Activated CD4-positive, alpha-beta T cell treated with anti-CD3 and anti-CD28 coated beads, Interleukin-2, amount 10 ng/mL, durations not matched to agents 7 days and 5 days (primary cell): ENCODE measurements at regions of chr1 and their contacts with region 1.

Region 1: DNA sequence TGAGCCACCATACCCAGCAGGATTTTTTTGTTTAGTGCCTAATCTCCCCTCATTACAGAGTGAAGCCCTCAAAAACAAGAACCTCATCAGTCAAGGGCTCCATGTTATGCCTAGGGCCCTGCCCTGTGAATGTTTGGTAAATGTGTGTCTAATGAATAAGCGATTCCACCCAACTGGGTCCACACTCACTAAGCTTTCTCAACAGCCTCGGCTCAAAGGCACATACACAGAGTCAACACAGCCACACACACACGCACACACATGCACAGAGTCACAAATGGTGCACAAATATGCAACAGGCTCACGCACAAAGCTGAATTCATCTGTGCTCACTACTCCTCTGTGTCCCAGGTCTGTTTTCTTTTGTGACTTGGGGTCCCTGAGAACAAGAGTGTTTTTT is 11.7 kb upstream of the SYNC start:
- DNase-seq: no peak
- H3K4me3 Mint-ChIP-seq: no peak overlapping the region
- H3K27ac Mint-ChIP-seq: no peak overlapping the region
- H3K4me1 Mint-ChIP-seq: peaks cover 13% of the 10 kb centered on the region
- H3K27me3 Mint-ChIP-seq: no peaks in the 10 kb centered on the region

Region 2: DNA sequence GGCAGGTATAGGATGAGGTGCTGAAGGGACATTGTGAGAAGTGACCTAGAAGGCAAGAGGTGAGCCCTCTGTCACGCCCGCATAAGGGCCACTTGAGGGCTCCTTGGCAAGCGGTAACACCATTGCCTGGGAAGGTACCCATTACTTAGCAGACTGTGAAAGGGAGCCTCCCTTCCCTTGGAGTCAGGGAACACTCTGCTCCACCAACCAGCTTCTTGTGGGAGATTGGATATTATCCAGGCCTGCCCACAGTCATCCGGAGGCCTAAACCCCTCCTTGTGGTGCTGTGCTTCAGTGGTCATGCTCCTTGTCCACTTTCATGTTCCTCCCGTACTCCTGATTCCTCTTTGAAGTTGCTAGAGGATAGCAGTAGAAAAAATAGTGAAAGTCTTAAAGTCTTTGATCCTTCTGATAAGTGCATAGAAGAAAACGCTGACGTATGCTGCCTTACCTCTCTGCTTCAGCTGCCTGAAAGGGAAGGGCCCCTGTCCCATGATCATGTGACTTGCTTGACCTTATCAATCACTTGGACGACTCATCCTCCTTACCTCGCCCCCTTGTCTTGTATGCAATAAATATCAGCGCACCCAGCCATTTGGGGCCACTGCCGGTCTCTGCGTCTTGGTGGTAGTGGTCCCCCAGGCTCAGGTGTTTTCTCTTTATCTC is 47.2 kb before region 1 on chr1:
- CTCF ChIA-PET with region 1: no interaction called
- POLR2A ChIA-PET with region 1: no interaction called
- DNase-seq: no peak
- H3K4me3 Mint-ChIP-seq: no peak overlapping the region
- H3K27ac Mint-ChIP-seq: no peak overlapping the region
- H3K4me1 Mint-ChIP-seq: peaks cover 5% of the 10 kb centered on the region
- H3K27me3 Mint-ChIP-seq: no peaks in the 10 kb centered on the region

Region 3: GRCh38 chr1:32724678-32725614 is 10.7 kb after region 1 on chr1:
- CTCF ChIA-PET with region 1: interaction called, 16 read pairs
- POLR2A ChIA-PET with region 1: no interaction called
- DNase-seq: peak; percentile 28
- H3K4me3 Mint-ChIP-seq: no peak overlapping the region
- H3K27ac Mint-ChIP-seq: peak overlapping the region; percentile 81
- H3K4me1 Mint-ChIP-seq: peaks cover 15% of the 10 kb centered on the region
- H3K27me3 Mint-ChIP-seq: peaks cover 9% of the 10 kb centered on the region

Region 4: GRCh38 chr1:32773018-32773763 is 58.9 kb after region 1 on chr1:
- CTCF ChIA-PET with region 1: interaction called, 50 read pairs
- POLR2A ChIA-PET with region 1: interaction called, 3 read pairs
- DNase-seq: peak; percentile 78
- H3K4me3 Mint-ChIP-seq: no peak overlapping the region
- H3K27ac Mint-ChIP-seq: no peak overlapping the region
- H3K4me1 Mint-ChIP-seq: peaks cover 9% of the 10 kb centered on the region
- H3K27me3 Mint-ChIP-seq: no peaks in the 10 kb centered on the region

Region 5: GRCh38 chr1:32870615-32871363 is 156.5 kb after region 1 on chr1 and contains the start of gene FNDC5:
- CTCF ChIA-PET with region 1: interaction called, 14 read pairs
- POLR2A ChIA-PET with region 1: no interaction called
- DNase-seq: no peak
- H3K4me3 Mint-ChIP-seq: peak within 1 kb of the TSS; percentile 49
- H3K27ac Mint-ChIP-seq: no peak within 1 kb of the TSS
- H3K4me1 Mint-ChIP-seq: peaks cover 7% of the 10 kb centered on the region
- H3K27me3 Mint-ChIP-seq: peaks cover 50% of the 10 kb centered on the region
- total RNA-seq, gene FNDC5: not detected

Region 6: DNA sequence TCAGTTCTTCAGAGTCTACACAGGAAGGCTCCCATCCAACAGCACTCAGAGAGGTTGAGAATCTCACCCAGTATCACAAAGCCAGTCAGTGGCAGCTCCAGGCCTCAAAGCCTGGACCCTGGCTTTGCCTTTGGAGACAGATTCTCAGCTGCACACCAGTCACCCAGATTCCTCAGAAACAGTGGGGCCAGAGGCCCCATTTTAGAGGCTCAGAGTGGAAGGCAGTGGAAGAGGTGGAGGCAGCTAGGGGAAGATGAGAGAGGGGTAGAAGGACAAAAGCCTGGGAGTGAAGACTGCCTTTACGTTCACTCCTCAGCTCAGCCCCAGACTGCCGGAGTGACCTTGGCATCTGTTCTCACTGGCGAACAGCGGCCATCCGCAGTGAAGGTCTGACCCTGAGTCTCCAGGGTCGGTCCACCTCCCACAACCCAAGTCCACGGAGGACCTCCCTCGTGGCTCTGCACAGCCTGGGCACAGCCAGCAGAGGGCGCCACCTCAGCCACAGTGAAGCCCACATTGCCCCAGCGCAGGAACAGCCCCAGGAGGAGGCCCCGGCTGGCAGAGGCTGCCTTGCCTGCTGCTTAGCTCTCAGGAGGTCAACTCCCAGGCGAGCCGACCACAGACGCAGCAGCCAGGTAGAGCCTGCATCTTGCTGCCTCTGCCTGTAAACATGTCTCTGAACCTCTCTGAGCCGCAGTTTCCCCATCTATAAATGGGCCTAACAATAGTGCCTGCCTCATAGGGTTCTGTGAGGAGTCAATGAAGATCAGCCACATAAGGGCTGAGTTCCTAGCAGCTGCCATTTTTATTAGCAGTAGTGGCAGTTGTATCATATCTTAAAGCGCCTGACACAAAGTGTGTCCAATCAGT is 162.3 kb after region 1 on chr1:
- CTCF ChIA-PET with region 1: interaction called, 14 read pairs
- POLR2A ChIA-PET with region 1: no interaction called
- DNase-seq: peak; percentile 72
- H3K4me3 Mint-ChIP-seq: no peak overlapping the region
- H3K27ac Mint-ChIP-seq: no peak overlapping the region
- H3K4me1 Mint-ChIP-seq: no peaks in the 10 kb centered on the region
- H3K27me3 Mint-ChIP-seq: peaks cover 42% of the 10 kb centered on the region

Region 7: DNA sequence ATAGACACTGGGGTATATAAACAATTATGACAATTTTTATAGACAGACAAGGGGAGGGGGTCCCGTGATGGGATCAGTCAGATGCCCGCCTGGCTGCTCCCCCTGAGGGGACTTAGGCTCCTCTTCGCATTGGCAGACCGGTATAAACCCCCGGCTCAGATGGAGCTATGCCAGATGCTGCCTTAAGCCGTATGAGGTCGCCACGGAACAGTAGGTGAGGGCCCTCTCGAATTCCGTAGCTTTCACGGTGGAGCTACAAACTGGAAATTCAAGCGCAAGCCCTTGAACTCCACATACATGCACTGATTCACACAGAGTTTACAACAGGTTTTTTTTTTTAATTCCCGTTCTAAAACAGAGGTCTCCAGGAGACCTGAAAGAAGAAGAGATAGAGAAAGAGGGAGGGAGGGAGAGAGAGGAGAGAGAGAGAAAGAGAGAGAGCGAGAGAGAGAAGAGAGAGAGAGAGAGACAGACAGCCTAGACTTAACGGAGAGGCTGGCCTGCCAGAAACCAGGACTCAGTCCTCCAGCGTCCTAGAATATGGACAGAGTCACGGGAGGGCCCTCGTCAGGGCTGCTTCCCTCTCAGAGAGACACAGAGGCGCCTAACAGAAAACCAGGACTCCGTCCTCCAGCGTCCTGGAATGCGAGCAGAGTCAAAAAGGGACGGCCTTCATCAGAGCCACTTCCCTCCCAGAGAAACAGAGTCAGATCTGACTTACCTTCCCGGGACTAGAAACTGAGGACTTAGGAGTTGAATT is 211.3 kb after region 1 on chr1:
- CTCF ChIA-PET with region 1: no interaction called
- POLR2A ChIA-PET with region 1: no interaction called
- DNase-seq: peak; percentile 19
- H3K4me3 Mint-ChIP-seq: no peak overlapping the region
- H3K27ac Mint-ChIP-seq: no peak overlapping the region
- H3K4me1 Mint-ChIP-seq: peaks cover 14% of the 10 kb centered on the region
- H3K27me3 Mint-ChIP-seq: peaks cover 59% of the 10 kb centered on the region